Adrenal gland (tissue), 19 donors: ENCODE measurements at regions of chr6 and their contacts with region 1.

Region 1: DNA sequence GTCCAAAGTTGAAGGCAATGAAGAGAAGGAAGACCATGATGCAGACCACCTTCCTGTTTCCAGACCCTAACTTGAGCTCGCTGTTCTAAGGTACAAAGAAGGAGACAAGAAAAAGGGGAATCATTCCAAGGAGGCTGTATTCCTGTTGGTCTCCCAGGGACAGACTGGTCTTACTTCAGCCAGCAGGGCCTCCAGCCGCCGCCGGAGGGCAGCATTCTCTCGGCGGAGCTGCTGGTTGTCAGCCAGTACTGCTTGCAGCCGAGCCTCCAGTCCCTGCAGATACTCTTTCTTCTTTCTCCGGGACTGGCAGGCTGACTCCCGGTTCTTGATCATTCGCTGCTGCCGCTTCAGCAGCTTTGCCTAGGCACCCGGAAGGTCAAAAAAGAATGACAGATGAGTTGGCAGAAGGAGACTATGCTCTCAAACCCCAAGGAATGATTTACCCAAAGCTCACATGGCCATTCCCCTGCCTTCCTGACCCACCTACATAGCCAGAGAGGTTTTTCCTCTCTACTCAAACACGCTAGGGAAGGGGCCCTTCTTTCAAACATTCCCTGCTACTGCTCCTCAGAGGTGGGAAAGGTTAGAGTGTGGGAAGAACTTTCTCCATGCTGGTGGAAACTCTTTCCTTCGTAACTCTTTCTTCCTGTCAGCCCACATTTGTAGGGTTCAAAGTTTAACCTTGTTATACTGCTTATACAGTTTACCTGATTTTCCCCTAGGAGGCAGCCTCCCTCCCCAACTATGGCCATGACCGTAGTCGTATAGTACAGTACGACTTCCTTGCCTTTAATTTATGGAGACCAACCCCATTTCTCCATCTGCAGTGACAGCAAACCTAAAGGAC is 9.0 kb downstream of the ATF6B start:
- DNase-seq: peak; percentile 87 to 96 (median 90)
- H3K4me3 ChIP-seq: no peak overlapping the region
- H3K27ac ChIP-seq: peak overlapping the region in 4 of 5 donors; percentile 15 to 67 (median 44)
- H3K4me1 ChIP-seq: peaks cover 3 to 20% of the 10 kb centered on the region in 2 donors
- H3K27me3 ChIP-seq: no peaks in the 10 kb centered on the region
- CTCF ChIP-seq: peak; percentile 84 to 94 (median 90)
- POLR2A ChIP-seq: no peak

Region 2: DNA sequence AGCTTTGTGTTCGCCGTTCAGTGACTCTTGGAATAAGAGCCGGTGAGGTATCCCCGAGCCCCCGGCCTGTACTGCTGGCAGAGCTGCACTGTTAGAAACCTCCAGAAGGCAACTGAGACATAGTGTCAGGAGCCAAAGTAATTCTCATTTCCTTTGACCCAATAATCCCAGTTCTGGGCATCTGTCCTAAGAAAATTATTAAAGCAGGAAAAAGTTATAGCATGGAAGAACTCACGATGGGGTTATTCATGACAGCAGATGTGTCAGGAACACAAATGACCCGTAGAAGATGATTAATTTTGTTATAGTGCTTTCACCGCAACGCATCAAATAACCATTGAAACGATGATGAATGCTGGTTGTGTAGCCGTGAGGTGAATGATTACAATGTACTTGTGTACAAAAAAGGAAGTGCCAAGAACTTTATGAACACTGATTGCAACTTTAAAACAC is 60.5 kb before region 1 on chr6:
- intact Hi-C with region 1: loop called in 1 of 2 experiments (anchors 10 kb)
- DNase-seq: no peak
- H3K4me3 ChIP-seq: no peak overlapping the region
- H3K27ac ChIP-seq: peak overlapping the region in 1 of 5 donors; percentile 71
- H3K4me1 ChIP-seq: no peaks in the 10 kb centered on the region
- H3K27me3 ChIP-seq: no peaks in the 10 kb centered on the region
- CTCF ChIP-seq: no peak
- POLR2A ChIP-seq: no peak

Region 3: DNA sequence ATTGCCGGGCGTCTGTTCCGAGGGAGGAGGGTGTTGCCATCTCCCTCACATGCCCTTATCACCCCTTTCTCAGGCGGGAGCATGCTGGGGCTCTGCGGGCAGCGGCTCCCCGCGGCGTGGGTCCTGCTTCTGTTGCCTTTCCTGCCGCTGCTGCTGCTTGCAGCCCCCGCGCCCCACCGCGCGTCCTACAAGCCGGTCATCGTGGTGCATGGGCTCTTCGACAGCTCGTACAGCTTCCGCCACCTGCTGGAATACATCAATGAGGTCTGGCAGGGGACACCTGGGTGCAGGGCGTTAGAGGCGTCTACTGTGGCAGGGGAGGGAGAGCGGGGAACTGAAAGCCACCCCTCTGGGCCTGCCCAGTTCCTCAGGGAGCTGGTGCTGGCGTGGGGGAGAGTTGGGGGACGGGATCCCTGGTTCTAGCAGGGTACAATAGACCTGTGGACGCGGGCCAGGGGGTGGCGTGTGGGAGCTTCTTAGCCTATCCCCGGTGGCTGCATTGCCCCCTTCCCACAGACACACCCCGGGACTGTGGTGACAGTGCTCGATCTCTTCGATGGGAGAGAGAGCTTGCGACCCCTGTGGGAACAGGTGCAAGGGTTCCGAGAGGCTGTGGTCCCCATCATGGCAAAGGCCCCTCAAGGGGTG is 35.6 kb after region 1 on chr6:
- intact Hi-C with region 1: loop called in 1 of 2 experiments (anchors 5 kb)
- DNase-seq: peak; percentile 70 to 88 (median 75)
- H3K4me3 ChIP-seq: peak overlapping the region; percentile 62 to 89 (median 76)
- H3K27ac ChIP-seq: peak overlapping the region; percentile 73 to 94 (median 86)
- H3K4me1 ChIP-seq: peaks cover 14 to 20% of the 10 kb centered on the region in 2 donors
- H3K27me3 ChIP-seq: no peaks in the 10 kb centered on the region
- CTCF ChIP-seq: peak; percentile 12 to 73 (median 64)
- POLR2A ChIP-seq: no peak

Region 4: DNA sequence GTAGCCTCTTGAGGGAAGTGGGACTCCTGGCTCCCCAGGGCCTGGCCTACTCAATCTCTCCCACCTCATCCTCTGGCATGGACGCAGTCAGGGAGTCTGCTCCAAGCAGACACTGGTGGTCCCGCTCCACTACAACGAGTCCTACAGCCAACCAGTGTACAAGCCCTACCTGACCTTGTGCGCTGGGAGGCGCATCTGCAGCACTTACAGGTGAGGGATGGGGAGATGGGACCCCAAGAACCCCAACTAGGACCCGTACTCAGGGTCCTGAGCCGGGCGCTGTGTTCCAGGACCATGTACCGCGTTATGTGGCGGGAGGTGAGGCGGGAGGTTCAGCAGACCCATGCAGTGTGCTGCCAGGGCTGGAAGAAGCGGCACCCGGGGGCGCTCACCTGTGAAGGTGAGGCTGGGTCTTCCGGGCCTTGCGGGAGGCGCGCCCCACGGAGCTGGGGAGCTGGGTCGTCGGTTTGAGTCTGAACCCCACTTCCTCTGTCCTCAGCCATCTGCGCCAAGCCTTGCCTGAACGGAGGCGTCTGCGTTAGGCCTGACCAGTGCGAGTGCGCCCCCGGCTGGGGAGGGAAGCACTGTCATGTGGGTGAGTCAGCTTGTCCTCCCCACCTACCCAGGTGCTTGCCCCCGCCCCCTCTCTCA is 47.5 kb after region 1 on chr6:
- intact Hi-C with region 1: loop called in 1 of 2 experiments (anchors 10 kb)
- DNase-seq: no peak
- H3K4me3 ChIP-seq: no peak overlapping the region
- H3K27ac ChIP-seq: no peak overlapping the region
- H3K4me1 ChIP-seq: no peaks in the 10 kb centered on the region
- H3K27me3 ChIP-seq: no peaks in the 10 kb centered on the region
- CTCF ChIP-seq: no peak
- POLR2A ChIP-seq: no peak

Region 5: GRCh38 chr6:32298663-32299267 is 179.8 kb after region 1 on chr6:
- intact Hi-C with region 1: no loop called
- DNase-seq: no peak
- H3K4me3 ChIP-seq: no peak overlapping the region
- H3K27ac ChIP-seq: no peak overlapping the region
- H3K4me1 ChIP-seq: no peaks in the 10 kb centered on the region
- H3K27me3 ChIP-seq: no peaks in the 10 kb centered on the region
- CTCF ChIP-seq: no peak
- POLR2A ChIP-seq: no peak

Region 6: DNA sequence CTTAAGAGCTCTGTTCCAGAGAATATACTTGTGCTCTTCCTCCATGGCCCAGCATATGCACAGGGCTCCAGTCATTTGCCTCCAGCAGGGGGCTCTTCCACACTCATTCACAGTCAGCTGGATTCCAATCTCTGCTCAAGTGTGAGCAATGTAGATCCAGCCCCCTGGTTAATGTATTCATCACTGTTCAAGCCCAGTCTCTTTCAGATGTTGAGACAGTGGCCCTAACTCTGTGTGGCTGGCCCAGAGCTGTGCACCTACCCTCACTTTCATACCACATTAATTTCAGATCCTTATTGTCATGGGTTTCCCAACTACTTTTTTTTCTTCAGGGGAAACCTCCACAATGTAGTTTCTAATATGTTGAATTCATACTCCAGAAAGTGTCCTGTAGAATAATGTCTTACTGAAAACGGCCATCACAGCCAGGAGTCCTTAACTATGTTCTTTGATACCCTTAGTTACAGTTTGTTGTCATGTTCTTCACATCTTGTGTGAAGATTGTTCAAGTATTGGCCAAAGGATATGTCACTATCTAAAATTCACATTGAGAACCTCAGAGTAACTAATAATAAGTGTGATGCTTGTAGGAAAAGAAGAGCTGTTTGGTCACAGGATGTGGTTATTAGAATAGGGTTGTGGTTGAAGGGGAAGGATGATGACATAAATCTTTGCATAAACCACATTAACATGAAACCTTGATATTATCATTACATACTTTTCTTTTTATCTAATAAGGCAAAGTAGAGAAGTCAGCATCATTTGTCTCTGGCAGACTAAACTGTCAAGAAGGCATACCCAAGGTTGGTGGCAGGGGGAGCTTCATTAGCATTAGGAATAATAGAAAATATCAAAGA is 503.8 kb after region 1 on chr6:
- intact Hi-C with region 1: no loop called
- DNase-seq: peak in 2 of 7 donors; percentile 21 to 45
- H3K4me3 ChIP-seq: no peak overlapping the region
- H3K27ac ChIP-seq: no peak overlapping the region
- H3K4me1 ChIP-seq: no peaks in the 10 kb centered on the region
- H3K27me3 ChIP-seq: no peaks in the 10 kb centered on the region
- CTCF ChIP-seq: peak in 3 of 6 experiments; percentile 24 to 35 (median 27)
- POLR2A ChIP-seq: no peak